MCF 10A (cell line): ENCODE measurements at regions of chr1 and their contacts with region 1.

Region 1: DNA sequence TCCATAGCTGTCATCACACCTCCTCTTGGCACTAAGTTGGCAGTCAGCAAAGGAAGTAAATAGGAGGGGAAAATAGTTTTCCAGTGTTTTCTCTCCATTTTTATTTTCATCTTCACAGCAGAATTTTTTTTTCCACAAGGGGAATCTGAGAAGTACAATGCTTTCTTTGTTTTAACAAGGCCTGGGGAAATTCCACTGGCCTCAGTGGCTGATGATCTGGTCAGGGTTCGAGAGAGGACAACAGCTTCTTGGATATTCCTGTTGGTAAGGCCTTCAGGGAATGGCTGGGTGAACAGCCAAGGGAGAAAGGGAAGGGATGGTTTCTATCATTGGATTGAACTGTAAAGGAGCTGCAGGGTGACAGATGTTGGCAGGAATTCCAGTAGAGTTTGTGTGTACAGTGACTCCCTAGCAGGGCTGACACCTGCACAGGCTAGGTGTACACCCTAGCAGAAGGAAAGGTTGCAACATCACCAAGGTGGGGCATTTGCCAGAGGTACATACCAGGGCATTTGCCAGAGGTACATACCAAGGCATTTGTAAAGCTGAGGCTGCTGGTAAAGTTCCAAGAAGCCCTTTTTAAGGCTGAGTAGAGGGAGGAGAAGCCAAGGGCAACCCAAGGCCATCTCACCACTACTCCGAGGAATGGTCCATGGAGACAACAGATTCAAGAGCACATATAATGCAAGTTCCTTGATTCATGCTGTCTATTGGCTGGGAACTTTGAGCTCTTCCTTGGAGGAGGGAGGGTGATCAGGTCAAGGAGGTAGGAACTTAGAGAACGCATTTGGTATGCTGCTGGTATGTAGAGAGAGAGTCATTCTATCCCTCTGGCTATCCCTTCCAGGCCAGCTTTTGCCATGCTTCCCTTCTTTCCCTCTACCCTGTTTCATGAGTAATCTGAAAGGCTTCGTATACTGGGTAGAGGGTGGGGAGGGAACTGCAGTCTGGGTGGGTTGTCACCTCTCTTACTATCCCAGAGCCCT is 3.1 kb downstream of the GJA5 start:
- DNase-seq: peak; percentile 95
- H3K4me3 Mint-ChIP-seq: no peak overlapping the region
- H3K27ac Mint-ChIP-seq: peak overlapping the region; percentile 46
- H3K4me1 Mint-ChIP-seq: peaks cover 43% of the 10 kb centered on the region
- H3K27me3 Mint-ChIP-seq: no peaks in the 10 kb centered on the region
- CTCF ChIP-seq: no peak

Region 2: DNA sequence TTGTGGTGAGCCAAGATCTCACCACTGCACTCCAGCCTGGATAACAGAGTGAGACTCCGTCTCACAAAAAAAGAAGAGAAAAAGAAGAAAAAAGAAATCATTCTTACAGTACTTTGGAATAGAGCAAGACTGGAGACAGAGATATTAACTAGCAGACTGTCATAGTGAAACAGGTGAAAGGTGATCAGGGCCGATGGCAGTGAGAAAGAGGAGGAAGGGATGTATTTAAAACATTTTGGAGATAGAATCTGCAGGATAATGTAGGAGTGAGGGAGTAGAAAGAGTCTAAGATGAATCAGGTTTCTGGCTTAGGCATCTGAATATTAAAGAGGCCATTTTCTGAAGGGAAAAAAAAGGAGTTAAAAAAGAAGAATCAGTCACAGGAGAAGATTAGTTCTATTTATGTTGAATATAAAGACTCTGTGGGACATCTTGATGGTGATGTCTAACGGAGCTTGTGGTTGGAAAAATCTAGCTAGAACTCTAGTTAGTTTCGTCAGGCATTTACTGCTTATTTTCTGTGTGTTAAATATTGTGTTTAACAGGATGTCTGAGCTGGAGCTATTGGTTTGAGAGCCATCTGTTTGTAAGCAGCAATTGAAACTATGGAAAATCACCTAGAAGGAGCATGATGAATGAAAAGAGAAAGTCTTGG is 187.6 kb before region 1 on chr1:
- CTCF ChIA-PET with region 1: no interaction called
- POLR2A ChIA-PET with region 1: no interaction called
- intact Hi-C with region 1: no loop called
- DNase-seq: no peak
- H3K4me3 Mint-ChIP-seq: no peak overlapping the region
- H3K27ac Mint-ChIP-seq: no peak overlapping the region
- H3K4me1 Mint-ChIP-seq: no peaks in the 10 kb centered on the region
- H3K27me3 Mint-ChIP-seq: peaks cover 72% of the 10 kb centered on the region
- CTCF ChIP-seq: no peak

Region 3: GRCh38 chr1:147670317-147671041 is 86.8 kb before region 1 on chr1 and contains the start of gene ACP6:
- CTCF ChIA-PET with region 1: interaction called, 3 read pairs
- POLR2A ChIA-PET with region 1: interaction called, 13 read pairs
- intact Hi-C with region 1: no loop called
- DNase-seq: peak; percentile 98
- H3K4me3 Mint-ChIP-seq: peak within 1 kb of the TSS; percentile 93
- H3K27ac Mint-ChIP-seq: peak within 1 kb of the TSS; percentile 75
- H3K4me1 Mint-ChIP-seq: peaks cover 18% of the 10 kb centered on the region
- H3K27me3 Mint-ChIP-seq: no peaks in the 10 kb centered on the region
- CTCF ChIP-seq: no peak
- total RNA-seq, gene ACP6: 40.5 and 54.1 TPM in 2 replicates